Activated naive CD4-positive, alpha-beta T cell treated with anti-CD3 and anti-CD28 coated beads for 36 hours (primary cell): ENCODE measurements at regions of chrX and their contacts with region 1.

Region 1: DNA sequence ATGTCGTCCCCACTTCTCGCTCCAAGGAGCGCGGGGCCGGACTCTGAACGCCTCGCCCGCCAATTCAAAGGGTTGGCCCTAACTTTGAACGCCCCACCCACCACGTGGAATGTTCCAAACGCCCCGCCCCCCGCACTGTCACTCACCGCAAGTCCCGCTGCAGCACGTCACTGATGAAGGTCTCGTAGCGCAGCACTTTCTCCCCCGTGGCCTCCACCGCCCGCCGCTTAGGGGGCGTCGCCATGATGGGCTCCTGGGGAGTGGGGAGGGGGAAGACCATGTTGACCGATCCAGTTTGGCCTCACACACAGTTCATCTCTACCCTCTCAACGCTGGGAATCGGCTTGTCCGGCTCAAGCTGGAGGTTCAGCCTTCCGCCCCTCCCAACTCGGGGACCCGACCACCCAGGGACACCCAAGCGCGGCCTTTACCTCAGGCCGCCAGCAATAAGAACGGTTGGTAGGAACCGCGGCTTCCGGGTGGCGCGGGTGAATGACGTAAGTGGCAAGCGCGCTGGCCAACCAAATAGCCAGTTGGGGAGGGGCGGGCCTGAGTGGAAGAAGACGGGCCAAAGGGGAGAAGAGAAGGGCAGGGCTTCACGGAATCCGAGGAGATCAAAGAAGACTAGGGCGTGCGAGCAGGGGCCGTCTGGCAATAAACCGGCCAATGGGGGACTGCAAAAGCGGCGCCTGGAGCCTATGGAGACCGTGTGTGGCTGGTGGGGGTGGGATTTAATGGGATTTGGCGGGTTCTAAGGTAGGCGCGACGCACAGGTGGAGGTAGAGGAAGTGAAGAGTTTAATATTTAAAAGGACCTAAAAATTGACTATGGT is at the start of gene UXT:
- DNase-seq: peak; percentile 96
- H3K4me3 Mint-ChIP-seq: peak within 1 kb of the TSS; percentile 88
- H3K27ac Mint-ChIP-seq: peak within 1 kb of the TSS; percentile 98
- H3K4me1 Mint-ChIP-seq: peaks cover 46% of the 10 kb centered on the region
- H3K27me3 Mint-ChIP-seq: no peaks in the 10 kb centered on the region
- total RNA-seq, gene UXT: 192 to 198 TPM

Region 2: DNA sequence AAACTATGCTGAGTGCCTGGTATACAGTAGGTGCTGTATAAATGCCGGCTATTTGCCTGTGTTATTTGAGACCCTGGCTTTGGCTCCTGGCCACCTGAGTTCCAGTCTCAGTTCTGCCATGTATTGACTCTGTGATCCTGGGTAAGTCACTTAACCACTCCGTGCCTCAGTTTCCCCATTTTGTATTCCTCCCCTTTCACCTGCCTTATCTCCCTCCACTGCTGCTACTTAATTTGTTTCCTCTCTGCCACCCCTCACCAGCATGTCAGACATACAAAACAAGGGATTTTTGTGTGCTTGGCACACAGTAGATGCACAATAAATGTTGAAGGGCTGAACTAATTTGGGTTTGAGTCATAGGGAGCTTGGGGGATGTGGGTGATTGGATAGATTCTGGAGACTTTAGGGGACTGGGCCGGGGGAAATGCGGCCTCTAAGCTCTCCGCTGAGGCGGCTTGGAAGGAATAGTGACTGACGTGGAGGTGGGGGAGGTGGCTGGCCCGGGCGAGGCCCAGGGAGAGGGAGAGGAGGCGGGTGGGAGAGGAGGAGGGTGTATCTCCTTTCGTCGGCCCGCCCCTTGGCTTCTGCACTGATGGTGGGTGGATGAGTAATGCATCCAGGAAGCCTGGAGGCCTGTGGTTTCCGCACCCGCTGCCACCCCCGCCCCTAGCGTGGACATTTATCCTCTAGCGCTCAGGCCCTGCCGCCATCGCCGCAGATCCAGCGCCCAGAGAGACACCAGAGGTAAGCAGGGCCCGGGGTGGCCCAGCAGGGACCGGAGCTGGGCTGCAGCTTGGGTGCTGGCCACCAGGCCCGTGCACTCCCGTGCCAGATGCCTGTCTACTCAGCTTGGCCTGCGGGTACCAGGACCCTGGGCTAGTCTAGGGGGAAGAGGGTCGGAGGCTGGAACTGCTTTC is 76.9 kb before region 1 on chrX and contains the start of gene TIMP1:
- CTCF ChIA-PET with region 1: no interaction called
- intact Hi-C with region 1: loop called (anchors 1 kb)
- DNase-seq: peak; percentile 92
- H3K4me3 Mint-ChIP-seq: peak within 1 kb of the TSS; percentile 64
- H3K27ac Mint-ChIP-seq: peak within 1 kb of the TSS; percentile 43
- H3K4me1 Mint-ChIP-seq: peaks cover 41% of the 10 kb centered on the region
- H3K27me3 Mint-ChIP-seq: no peaks in the 10 kb centered on the region
- total RNA-seq, gene TIMP1: 6.7 to 9.4 TPM

Region 3: DNA sequence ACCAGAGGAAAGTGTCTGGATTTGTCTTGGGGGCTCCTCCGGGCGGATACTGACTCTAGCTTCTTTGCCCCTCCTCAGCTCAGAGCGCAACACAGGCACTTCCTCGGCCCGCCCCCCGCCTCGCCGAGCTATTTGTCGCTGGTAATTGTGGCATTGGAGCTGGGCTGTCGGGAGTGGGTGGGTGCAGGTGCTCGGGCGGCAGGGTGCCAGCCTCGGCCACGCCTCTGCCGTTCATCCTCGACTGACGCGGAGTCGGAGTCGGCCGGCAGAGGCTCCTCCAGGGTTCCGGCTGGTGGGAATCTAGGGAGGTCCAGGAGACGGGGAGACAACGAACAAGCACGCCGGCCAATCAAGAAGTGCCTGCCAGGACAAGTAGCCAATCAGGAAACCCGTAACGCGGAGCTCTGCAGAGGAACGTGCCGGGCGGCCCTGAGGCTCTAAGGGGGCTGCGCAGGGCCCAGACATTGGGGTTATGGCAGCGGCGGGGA is 35.3 kb before region 1 on chrX:
- CTCF ChIA-PET with region 1: no interaction called
- intact Hi-C with region 1: no loop called
- DNase-seq: peak; percentile 47
- H3K4me3 Mint-ChIP-seq: peak overlapping the region; percentile 79
- H3K27ac Mint-ChIP-seq: no peak overlapping the region
- H3K4me1 Mint-ChIP-seq: peaks cover 22% of the 10 kb centered on the region
- H3K27me3 Mint-ChIP-seq: no peaks in the 10 kb centered on the region

Region 4: DNA sequence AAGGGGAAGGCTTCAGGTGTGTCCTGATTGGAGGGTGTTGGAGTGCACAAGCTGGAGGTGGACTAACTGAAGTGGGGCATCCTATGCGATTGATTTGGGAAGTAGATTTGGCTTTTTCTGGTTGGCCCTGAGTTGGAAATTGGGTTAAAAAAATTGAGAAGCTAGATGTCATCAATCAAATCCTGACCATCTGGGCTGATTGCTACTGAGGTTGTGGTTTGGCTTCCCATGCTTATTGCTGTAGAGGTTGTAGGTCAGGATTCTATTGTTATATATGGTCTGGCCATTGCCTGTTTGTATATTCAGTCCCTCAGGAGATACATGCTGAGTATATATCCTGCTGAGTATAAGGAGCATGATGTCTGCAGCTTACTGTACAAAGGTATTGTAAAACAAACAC is 170.1 kb after region 1 on chrX:
- CTCF ChIA-PET with region 1: no interaction called
- intact Hi-C with region 1: no loop called
- DNase-seq: no peak
- H3K4me3 Mint-ChIP-seq: no peak overlapping the region
- H3K27ac Mint-ChIP-seq: no peak overlapping the region
- H3K4me1 Mint-ChIP-seq: peaks cover 2% of the 10 kb centered on the region
- H3K27me3 Mint-ChIP-seq: no peaks in the 10 kb centered on the region